Breast epithelium (tissue), 4 donors: ENCODE measurements at regions of chr15 and their contacts with region 1.

Region 1: DNA sequence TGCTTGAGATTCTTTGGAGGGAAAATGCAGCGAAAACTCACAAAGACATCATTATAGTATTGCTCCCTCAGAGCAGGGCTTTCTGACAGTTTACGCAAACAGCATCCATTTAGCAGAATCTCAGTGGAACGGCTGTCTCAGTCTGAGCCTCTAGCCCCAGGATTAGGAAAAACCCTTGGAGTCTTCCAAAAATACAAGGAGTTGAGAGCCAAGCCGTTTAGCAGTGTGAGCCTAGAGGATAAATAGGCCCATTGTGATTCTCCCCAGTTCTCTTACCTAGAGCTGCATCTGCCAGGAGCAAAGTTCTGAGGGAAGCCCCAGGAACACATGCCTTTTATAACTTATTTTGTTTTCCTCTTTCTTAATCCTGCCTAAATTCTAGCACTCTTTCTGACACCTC is 359.6 kb downstream of the NTRK3 start:
- DNase-seq: peak in 1 of 2 donors; percentile 55
- H3K4me3 ChIP-seq: no peak overlapping the region
- H3K27ac ChIP-seq: peak overlapping the region; percentile 40 to 48
- H3K4me1 ChIP-seq: no peaks in the 10 kb centered on the region
- H3K27me3 ChIP-seq: no peaks in the 10 kb centered on the region
- CTCF ChIP-seq: no peak
- POLR2A ChIP-seq: no peak

Region 2: DNA sequence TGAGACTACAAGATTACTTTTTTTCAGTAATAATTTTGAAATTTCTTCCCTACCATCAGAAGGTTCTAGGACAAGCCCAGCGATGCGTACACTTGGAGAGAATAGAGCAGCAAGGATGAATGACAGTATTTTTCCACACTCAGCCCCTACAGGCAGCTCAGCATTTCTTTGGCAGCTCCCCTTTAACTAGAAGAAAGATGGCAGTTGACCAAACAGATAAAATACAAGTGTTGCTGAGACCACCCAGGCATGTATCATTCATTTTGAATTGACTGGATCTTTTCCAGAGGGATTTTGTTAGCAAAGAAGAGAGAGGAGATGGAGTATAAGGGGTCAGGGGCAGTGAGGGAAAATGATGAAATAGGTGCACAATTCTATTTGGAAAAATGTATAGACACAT is 1055.9 kb before region 1 on chr15:
- intact Hi-C with region 1: loop called (anchors 5 kb)
- DNase-seq: no peak
- H3K4me3 ChIP-seq: no peak overlapping the region
- H3K27ac ChIP-seq: no peak overlapping the region
- H3K4me1 ChIP-seq: no peaks in the 10 kb centered on the region
- H3K27me3 ChIP-seq: peaks cover 0 to 2% of the 10 kb centered on the region in 2 donors
- CTCF ChIP-seq: no peak
- POLR2A ChIP-seq: no peak

Region 3: GRCh38 chr15:86863226-86863915 is 1033.6 kb before region 1 on chr15:
- intact Hi-C with region 1: no loop called
- DNase-seq: no peak
- H3K4me3 ChIP-seq: no peak overlapping the region
- H3K27ac ChIP-seq: no peak overlapping the region
- H3K4me1 ChIP-seq: no peaks in the 10 kb centered on the region
- H3K27me3 ChIP-seq: no peaks in the 10 kb centered on the region
- CTCF ChIP-seq: no peak
- POLR2A ChIP-seq: no peak

Region 4: GRCh38 chr15:87907676-87908446 is 10.9 kb after region 1 on chr15:
- intact Hi-C with region 1: no loop called
- DNase-seq: no peak
- H3K4me3 ChIP-seq: no peak overlapping the region
- H3K27ac ChIP-seq: no peak overlapping the region
- H3K4me1 ChIP-seq: no peaks in the 10 kb centered on the region
- H3K27me3 ChIP-seq: no peaks in the 10 kb centered on the region
- CTCF ChIP-seq: no peak
- POLR2A ChIP-seq: no peak